A673 (cell line): ENCODE measurements at regions of chr19 and their contacts with region 1.

Region 1: DNA sequence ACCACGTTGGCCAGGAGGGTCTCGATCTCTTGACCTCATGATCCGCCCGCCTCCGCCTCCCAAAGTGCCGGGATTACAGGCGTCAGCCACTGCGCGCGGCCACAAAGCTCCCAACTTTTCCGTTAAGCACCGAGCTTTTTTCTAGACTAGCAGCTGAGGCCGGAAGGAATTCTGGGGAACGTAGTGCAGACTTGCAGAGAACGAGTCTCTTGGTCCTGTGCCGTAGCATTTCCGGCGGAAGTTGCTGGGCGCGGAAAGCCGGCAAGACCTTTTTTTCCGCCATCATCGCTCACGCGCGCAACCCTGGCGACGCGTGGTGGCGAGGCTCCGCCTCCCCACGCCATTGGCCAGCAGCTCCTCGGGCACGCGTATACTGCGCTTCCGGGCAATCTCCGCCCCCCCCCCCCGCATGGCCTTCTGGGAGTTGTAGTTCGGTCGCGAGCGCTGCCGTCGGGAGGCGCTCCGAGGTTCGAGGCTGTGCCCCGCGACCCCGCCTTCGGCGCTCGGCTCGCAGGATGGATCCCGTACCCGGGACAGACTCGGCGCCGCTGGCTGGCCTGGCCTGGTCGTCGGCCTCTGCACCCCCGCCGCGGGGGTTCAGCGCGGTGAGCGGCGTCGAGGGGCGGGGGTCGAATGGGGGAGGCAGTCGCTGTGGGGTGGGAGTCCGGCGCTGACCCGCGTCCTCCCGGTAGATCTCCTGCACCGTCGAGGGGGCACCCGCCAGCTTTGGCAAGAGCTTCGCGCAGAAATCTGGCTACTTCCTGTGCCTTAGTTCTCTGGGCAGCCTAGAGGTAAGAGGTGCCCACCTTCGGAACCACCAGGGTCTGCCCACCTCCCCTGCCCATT is at the start of gene MVB12A:
- DNase-seq: peak; percentile 100
- H3K4me3 ChIP-seq: peak within 1 kb of the TSS; percentile 92
- H3K27ac ChIP-seq: peak within 1 kb of the TSS; percentile 81
- H3K4me1 ChIP-seq: peaks cover 3% of the 10 kb centered on the region
- H3K27me3 ChIP-seq: no peaks in the 10 kb centered on the region
- CTCF ChIP-seq: no peak
- total RNA-seq, gene MVB12A: 39.5 and 56.9 TPM in 2 replicates

Region 2: DNA sequence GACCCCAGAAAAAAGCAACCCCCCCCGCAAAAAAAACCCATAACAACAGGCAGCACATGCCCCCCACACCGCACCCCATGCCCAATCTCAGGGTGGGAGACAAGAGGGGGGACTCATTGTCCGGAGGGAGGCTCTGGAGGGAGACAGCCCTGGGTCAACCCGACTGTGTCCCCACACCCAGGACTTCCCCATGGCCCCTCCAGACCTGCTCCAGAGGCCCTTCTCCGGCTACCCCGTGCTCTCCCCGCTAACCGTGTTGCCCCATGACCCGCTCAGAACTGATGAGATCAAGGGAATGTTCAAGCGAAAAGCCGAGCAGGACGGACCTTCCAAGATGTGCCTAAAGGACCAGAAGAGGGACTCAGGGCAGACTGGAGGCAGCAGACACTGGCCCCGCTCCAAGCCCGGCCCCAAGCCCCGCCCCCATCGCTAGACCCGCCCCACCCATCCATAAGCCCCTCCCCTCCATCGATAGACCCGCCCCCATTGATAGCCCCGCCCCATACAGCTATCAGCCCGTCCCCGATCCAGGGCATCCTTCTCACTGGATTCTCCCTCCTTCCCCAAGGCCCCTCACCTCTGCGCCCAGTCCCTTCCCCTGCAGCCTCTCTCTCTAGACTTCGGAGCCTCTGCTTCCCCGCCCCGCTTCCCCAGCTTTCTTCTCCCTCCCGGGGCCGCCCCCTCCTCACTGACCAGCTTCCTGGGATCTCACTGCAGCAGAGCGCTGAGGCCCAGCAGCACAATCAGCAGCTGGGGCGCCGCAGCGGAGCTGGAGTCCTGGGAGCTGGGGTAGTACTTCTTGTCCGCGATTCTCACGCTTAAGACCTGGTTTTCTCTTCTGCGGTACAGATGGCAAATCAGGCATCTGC is 16.6 kb before region 1 on chr19:
- CTCF ChIA-PET with region 1: no interaction called
- POLR2A ChIA-PET with region 1: interaction called, 10 read pairs
- intact Hi-C with region 1: no loop called
- DNase-seq: no peak
- H3K4me3 ChIP-seq: no peak overlapping the region
- H3K27ac ChIP-seq: no peak overlapping the region
- H3K4me1 ChIP-seq: peaks cover 13% of the 10 kb centered on the region
- H3K27me3 ChIP-seq: no peaks in the 10 kb centered on the region
- CTCF ChIP-seq: no peak

Region 3: GRCh38 chr19:17560205-17560595 is 140.4 kb after region 1 on chr19:
- CTCF ChIA-PET with region 1: no interaction called
- POLR2A ChIA-PET with region 1: no interaction called
- intact Hi-C with region 1: no loop called
- DNase-seq: no peak
- H3K4me3 ChIP-seq: no peak overlapping the region
- H3K27ac ChIP-seq: no peak overlapping the region
- H3K4me1 ChIP-seq: peaks cover under 1% of the 10 kb centered on the region
- H3K27me3 ChIP-seq: no peaks in the 10 kb centered on the region
- CTCF ChIP-seq: no peak